ENCODE measurements at regions of chr9 and their contacts with region 1.

Region 1: GRCh38 chr9:105414947-105415661 is 32.7 kb upstream of the FSD1L start:
- DNase-seq: peak in 4 of 5 donors; percentile 76 to 90 (median 82)
- H3K4me3 ChIP-seq: no peak overlapping the region
- H3K27ac ChIP-seq: no peak overlapping the region
- H3K4me1 ChIP-seq: peaks cover 0 to 2% (median 0%) of the 10 kb centered on the region in 3 donors
- H3K27me3 ChIP-seq: no peaks in the 10 kb centered on the region
- CTCF ChIP-seq: peak; percentile 80

Region 2: GRCh38 chr9:105173306-105173705 is 241.8 kb before region 1 on chr9:
- intact Hi-C with region 1: loop called (anchors 10 kb)
- DNase-seq: no peak
- H3K4me3 ChIP-seq: no peak overlapping the region
- H3K27ac ChIP-seq: no peak overlapping the region
- H3K4me1 ChIP-seq: no peaks in the 10 kb centered on the region
- H3K27me3 ChIP-seq: no peaks in the 10 kb centered on the region
- CTCF ChIP-seq: no peak